ENCODE measurements at regions of chr13 and their contacts with region 1.

Region 1: GRCh38 chr13:99258210-99258860 is at the start of gene GPR18:
- DNase-seq: peak in 4 of 5 donors; percentile 16 to 73 (median 58)
- H3K4me3 ChIP-seq: peak within 1 kb of the TSS; percentile 74
- H3K4me3 Mint-ChIP-seq: peak within 1 kb of the TSS; percentile 91 to 98 (median 96)
- H3K27ac ChIP-seq: peak within 1 kb of the TSS; percentile 39
- H3K27ac Mint-ChIP-seq: peak within 1 kb of the TSS; percentile 89 to 99 (median 96)
- H3K4me1 ChIP-seq: peaks cover 63% of the 10 kb centered on the region
- H3K4me1 Mint-ChIP-seq: peaks cover 65 to 83% (median 78%) of the 10 kb centered on the region in 3 donors
- H3K27me3 ChIP-seq: no peaks in the 10 kb centered on the region
- H3K27me3 Mint-ChIP-seq: no peaks in the 10 kb centered on the region
- total RNA-seq, gene GPR18: 15.2 to 16.2 TPM

Region 2: GRCh38 chr13:99093997-99094396 is 164.3 kb before region 1 on chr13:
- CTCF ChIA-PET with region 1: no interaction called
- POLR2A ChIA-PET with region 1: no interaction called
- DNase-seq: no peak
- H3K4me3 ChIP-seq: no peak overlapping the region
- H3K4me3 Mint-ChIP-seq: no peak overlapping the region
- H3K27ac ChIP-seq: no peak overlapping the region
- H3K27ac Mint-ChIP-seq: no peak overlapping the region
- H3K4me1 ChIP-seq: no peaks in the 10 kb centered on the region
- H3K4me1 Mint-ChIP-seq: peaks cover 0 to 3% (median 0%) of the 10 kb centered on the region in 3 donors
- H3K27me3 ChIP-seq: no peaks in the 10 kb centered on the region
- H3K27me3 Mint-ChIP-seq: peaks cover 0 to 4% of the 10 kb centered on the region in 2 donors

Region 3: DNA sequence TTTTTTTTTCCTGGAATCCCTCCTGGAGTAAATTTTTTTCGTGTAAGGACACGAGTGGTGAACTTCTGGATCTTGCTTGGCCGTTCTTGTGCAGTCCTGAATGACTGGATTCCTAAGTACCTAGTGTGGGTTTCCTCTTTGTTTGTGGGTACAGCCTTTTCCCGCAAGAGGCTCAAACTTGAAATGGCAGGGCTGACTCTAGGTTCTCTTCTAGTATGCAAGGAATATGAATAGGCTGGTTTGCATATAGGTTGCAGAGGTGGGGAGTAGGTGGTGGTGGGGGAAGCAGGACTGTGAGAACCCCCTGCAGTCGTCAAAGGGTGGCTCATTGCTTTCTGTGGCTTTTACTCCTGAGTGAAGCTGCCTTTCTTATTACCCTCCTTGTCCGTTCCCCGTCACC is 44.1 kb before region 1 on chr13:
- CTCF ChIA-PET with region 1: interaction called, 223 read pairs
- POLR2A ChIA-PET with region 1: interaction called, 12 read pairs
- DNase-seq: peak in 1 of 5 donors; percentile 63
- H3K4me3 ChIP-seq: peak overlapping the region; percentile 34
- H3K4me3 Mint-ChIP-seq: peak overlapping the region; percentile 35 to 98 (median 94)
- H3K27ac ChIP-seq: no peak overlapping the region
- H3K27ac Mint-ChIP-seq: peak overlapping the region; percentile 97 to 100 (median 98)
- H3K4me1 ChIP-seq: peaks cover 81% of the 10 kb centered on the region
- H3K4me1 Mint-ChIP-seq: peaks cover 68 to 90% (median 87%) of the 10 kb centered on the region in 3 donors
- H3K27me3 ChIP-seq: no peaks in the 10 kb centered on the region
- H3K27me3 Mint-ChIP-seq: no peaks in the 10 kb centered on the region

Region 4: GRCh38 chr13:99228737-99229691 is 29.3 kb before region 1 on chr13:
- CTCF ChIA-PET with region 1: interaction called, 12 read pairs
- POLR2A ChIA-PET with region 1: interaction called, 10 read pairs
- DNase-seq: peak in 1 of 5 donors; percentile 42
- H3K4me3 ChIP-seq: peak overlapping the region; percentile 23
- H3K4me3 Mint-ChIP-seq: peak overlapping the region; percentile 71 to 91 (median 80)
- H3K27ac ChIP-seq: no peak overlapping the region
- H3K27ac Mint-ChIP-seq: peak overlapping the region; percentile 83 to 97 (median 93)
- H3K4me1 ChIP-seq: peaks cover 77% of the 10 kb centered on the region
- H3K4me1 Mint-ChIP-seq: peaks cover 74 to 92% (median 86%) of the 10 kb centered on the region in 3 donors
- H3K27me3 ChIP-seq: no peaks in the 10 kb centered on the region
- H3K27me3 Mint-ChIP-seq: no peaks in the 10 kb centered on the region

Region 5: GRCh38 chr13:99313501-99313900 is 55.2 kb after region 1 on chr13:
- CTCF ChIA-PET with region 1: no interaction called
- POLR2A ChIA-PET with region 1: no interaction called
- DNase-seq: no peak
- H3K4me3 ChIP-seq: peak overlapping the region; percentile 30
- H3K4me3 Mint-ChIP-seq: peak overlapping the region; percentile 46 to 82 (median 68)
- H3K27ac ChIP-seq: no peak overlapping the region
- H3K27ac Mint-ChIP-seq: peak overlapping the region; percentile 82 to 100 (median 93)
- H3K4me1 ChIP-seq: peaks cover 87% of the 10 kb centered on the region
- H3K4me1 Mint-ChIP-seq: peaks cover 73 to 91% (median 89%) of the 10 kb centered on the region in 3 donors
- H3K27me3 ChIP-seq: no peaks in the 10 kb centered on the region
- H3K27me3 Mint-ChIP-seq: peaks cover 0 to 2% of the 10 kb centered on the region in 2 donors

Region 6: DNA sequence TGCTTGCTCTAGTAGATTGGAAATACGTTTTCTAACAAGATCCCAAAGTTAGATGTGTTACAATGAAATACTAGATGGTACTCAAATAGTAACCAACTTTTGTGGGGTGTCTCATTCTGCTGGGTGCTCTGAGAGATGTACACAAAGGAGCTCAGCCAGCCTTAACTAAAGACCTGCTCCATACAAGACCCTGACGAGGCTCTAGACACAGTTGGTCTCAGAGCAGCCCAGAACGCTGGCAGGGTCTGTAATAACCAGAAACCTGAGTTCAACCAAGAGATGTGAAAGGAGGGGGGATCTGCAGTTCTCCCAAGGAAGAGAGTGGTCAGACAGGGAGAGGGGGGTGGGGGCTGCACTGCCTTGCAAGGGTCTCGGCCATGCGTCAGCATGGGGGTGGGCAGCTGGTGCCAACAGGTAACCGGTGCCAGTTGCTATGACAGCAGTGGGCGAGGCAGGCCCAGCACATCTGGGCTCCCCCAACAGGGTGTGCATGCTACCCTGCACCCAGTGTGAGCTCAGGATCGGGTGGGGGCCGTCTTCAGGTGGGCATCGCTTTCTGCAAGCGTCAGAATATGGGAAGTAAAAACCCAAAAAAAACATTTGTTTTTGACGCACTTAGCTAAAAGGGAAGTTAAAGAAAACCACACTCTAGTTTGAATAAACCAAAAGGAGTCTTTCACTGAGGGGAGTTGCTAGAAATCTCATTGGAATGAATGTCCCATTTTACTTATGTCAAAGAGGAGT is 116.8 kb after region 1 on chr13:
- CTCF ChIA-PET with region 1: no interaction called
- POLR2A ChIA-PET with region 1: interaction called, 12 read pairs
- DNase-seq: peak in 4 of 5 donors; percentile 37 to 91 (median 88)
- H3K4me3 ChIP-seq: peak overlapping the region; percentile 15
- H3K4me3 Mint-ChIP-seq: peak overlapping the region; percentile 55 to 83 (median 75)
- H3K27ac ChIP-seq: peak overlapping the region; percentile 33
- H3K27ac Mint-ChIP-seq: peak overlapping the region; percentile 92 to 99 (median 97)
- H3K4me1 ChIP-seq: peaks cover 90% of the 10 kb centered on the region
- H3K4me1 Mint-ChIP-seq: peaks cover 82 to 98% (median 97%) of the 10 kb centered on the region in 3 donors
- H3K27me3 ChIP-seq: no peaks in the 10 kb centered on the region
- H3K27me3 Mint-ChIP-seq: peaks cover 0 to 4% of the 10 kb centered on the region in 2 donors

Measured in CD8-positive, alpha-beta memory T cell (primary cell).